Ascending aorta (tissue), 2 donors: ENCODE measurements at regions of chr12 and their contacts with region 1.

Region 1: DNA sequence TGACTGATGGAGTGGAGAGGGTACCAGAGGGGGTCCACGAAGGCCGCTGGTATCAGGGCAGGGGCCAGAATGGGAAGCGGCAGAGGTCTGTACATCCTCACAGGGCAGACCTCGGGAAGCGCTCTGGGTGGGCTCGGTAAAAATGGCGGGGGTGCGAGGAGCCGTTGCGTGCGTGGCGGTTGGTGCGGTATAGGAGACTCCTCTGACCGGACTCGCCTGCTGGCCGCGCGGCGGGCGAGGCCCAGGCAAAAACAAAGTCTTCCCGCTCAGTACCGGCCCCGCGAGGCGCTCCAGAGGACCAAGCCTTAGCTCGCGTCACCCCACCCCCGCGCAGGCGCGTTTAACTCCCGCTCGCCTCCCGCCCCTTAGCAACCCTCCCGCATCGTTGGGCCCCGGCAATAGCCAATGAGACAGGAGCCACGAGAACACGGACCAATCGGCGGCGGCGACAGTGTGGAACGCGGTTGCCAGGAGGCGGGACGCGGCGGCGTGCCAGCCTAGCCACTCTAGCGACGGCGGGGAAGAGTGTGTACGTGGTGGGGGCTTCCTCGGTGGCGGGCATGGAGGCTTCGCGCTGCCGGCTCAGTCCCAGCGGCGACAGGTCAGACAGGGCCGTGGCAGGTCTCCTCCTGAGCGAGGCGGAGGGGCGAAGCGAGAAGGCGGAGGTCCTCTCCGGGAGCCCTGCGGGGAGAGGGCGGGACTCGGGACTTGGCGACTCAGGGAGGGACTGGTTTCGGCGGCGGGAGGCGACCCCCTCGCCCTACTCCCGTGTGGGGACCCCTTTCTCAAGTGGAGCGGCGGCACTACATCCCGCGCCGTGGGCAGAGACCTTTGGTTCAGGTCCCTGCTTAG is at the start of gene TULP3:
- DNase-seq: peak; percentile 96 to 99
- H3K4me3 ChIP-seq: peak within 1 kb of the TSS; percentile 62 to 93
- H3K27ac ChIP-seq: peak within 1 kb of the TSS; percentile 94 to 97
- H3K4me1 ChIP-seq: peaks cover 0 to 26% of the 10 kb centered on the region in 2 donors
- H3K27me3 ChIP-seq: no peaks in the 10 kb centered on the region
- CTCF ChIP-seq: no peak
- total RNA-seq, gene TULP3: 24.8 TPM

Region 2: DNA sequence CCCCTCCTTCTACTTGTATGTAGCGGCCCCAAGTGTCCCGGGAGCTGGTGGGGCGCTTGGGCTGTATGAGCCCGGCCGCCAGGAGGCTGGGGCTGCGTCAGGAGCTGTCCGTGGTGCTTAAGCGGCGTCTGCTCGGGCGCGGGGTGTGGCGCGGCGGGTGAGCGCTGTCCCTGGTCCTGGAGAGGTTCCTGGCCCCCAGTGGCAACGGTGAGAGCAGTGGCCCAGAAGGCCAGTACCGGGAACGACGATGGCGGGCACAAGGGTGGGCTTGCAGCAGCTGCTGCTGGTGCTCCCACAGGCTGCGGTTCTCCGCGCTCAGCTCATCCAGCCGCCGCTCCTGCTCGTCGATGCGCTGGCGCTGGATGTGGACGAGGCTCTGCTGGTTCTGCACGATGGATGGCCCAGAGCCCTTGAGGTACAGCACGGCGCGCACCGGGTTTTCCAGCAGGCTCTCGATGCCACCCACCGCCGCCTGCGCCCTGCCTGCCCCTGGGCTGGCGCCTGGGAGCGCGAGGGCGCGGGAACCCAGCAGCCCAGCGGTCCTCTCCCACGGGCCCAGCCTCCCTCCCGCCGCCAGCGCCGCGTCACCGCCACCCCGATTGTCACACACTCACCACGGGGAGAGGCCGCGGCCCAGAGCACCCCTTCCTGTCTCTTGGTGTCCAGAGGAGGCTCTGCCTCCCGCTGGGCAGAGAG is 137.8 kb before region 1 on chr12:
- intact Hi-C with region 1: no loop called
- DNase-seq: peak in 1 of 2 donors; percentile 77
- H3K4me3 ChIP-seq: no peak overlapping the region
- H3K27ac ChIP-seq: no peak overlapping the region
- H3K4me1 ChIP-seq: no peaks in the 10 kb centered on the region
- H3K27me3 ChIP-seq: no peaks in the 10 kb centered on the region
- CTCF ChIP-seq: no peak

Region 3: GRCh38 chr12:2812290-2813213 is 78.1 kb before region 1 on chr12 and contains the start of gene ITFG2:
- intact Hi-C with region 1: loop called (anchors 2 kb)
- DNase-seq: peak; percentile 96 to 99
- H3K4me3 ChIP-seq: peak within 1 kb of the TSS; percentile 83 to 85
- H3K27ac ChIP-seq: peak within 1 kb of the TSS; percentile 88 to 90
- H3K4me1 ChIP-seq: peaks cover 0 to 14% of the 10 kb centered on the region in 2 donors
- H3K27me3 ChIP-seq: no peaks in the 10 kb centered on the region
- CTCF ChIP-seq: no peak
- total RNA-seq, gene ITFG2: 19.9 TPM

Region 4: GRCh38 chr12:2877047-2877952 is 13.3 kb before region 1 on chr12 and contains the starts of genes FOXM1 and RHNO1:
- intact Hi-C with region 1: loop called (anchors 1 kb)
- DNase-seq: peak; percentile 46 to 91
- H3K4me3 ChIP-seq: peak within 1 kb of the TSS; percentile 94 to 99
- H3K27ac ChIP-seq: peak within 1 kb of the TSS; percentile 91 to 96
- H3K4me1 ChIP-seq: peaks cover 0 to 16% of the 10 kb centered on the region in 2 donors
- H3K27me3 ChIP-seq: no peaks in the 10 kb centered on the region
- CTCF ChIP-seq: peak in 2 of 3 experiments; percentile 23 to 28
- total RNA-seq, gene FOXM1: not detected
- total RNA-seq, gene RHNO1: 2.9 TPM

Region 5: GRCh38 chr12:2959505-2960389 is 69.1 kb after region 1 on chr12:
- intact Hi-C with region 1: loop called (anchors 1 kb)
- DNase-seq: peak in 1 of 2 donors; percentile 83
- H3K4me3 ChIP-seq: peak overlapping the region; percentile 71 to 75
- H3K27ac ChIP-seq: peak overlapping the region; percentile 93 to 95
- H3K4me1 ChIP-seq: peaks cover 5 to 16% of the 10 kb centered on the region in 2 donors
- H3K27me3 ChIP-seq: no peaks in the 10 kb centered on the region
- CTCF ChIP-seq: no peak

Region 6: DNA sequence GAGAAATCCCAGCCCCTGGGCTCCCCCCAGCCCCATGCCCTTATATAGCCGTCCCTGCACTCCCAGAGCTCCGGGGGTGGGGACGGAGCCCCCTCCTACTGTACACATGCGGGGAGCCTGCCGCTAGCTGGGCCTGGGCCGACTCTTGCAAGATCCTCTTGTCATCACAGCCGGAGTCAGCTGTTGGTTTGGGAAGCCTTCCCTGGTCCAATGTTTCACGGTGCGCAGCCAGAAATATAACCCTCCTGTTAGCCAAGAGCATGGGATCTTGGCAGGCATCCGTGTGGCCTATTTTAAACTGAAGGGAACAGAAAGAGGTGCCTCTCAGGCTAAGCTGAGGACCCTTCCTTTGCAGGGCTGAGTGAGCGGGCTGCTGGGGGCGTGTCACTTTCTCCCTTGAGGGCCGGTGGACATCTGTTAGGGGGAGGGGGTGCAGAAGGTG is 361.9 kb after region 1 on chr12:
- intact Hi-C with region 1: loop called (anchors 10 kb)
- DNase-seq: peak; percentile 76 to 95
- H3K4me3 ChIP-seq: peak overlapping the region in 1 of 2 donors; percentile 26
- H3K27ac ChIP-seq: peak overlapping the region; percentile 75 to 86
- H3K4me1 ChIP-seq: peaks cover 26 to 34% of the 10 kb centered on the region in 2 donors
- H3K27me3 ChIP-seq: no peaks in the 10 kb centered on the region
- CTCF ChIP-seq: no peak